Posterior vena cava (tissue), 2 donors: ENCODE measurements at regions of chr7 and their contacts with region 1.

Region 1: GRCh38 chr7:77657427-77658224 is 38.6 kb upstream of the RSBN1L start:
- DNase-seq: no peak

Region 2: GRCh38 chr7:77498659-77499422 is 158.8 kb before region 1 on chr7:
- intact Hi-C with region 1: no loop called
- DNase-seq: no peak

Region 3: DNA sequence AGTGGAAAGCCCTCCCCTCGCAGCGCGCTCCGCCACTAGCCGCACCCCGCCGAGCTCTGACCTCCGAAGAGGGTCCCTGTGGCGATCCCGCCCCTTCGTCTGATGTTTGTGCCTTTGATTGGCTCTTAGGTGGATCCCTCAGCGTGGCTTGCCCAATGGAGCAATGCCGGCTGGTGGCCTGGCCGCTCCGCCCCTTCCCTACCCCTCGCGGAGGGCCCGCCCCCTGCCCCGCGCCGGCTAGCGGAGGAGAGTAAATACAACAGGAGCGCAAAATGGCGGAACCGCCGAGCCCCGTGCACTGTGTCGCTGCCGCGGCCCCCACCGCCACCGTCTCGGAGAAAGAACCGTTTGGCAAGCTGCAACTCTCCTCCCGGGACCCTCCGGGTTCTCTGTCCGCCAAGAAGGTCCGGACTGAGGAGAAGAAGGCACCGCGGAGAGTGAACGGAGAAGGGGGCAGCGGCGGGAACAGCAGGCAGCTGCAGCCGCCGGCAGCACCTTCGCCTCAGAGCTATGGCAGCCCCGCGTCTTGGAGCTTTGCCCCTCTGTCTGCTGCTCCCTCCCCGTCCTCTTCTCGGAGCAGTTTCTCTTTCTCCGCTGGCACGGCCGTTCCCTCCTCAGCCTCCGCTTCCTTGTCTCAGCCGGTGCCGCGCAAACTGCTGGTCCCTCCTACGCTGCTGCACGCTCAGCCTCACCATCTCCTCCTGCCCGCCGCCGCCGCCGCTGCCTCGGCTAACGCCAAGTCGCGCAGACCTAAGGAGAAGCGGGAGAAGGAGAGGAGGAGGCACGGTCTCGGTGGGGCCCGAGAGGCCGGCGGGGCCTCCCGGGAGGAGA is 38.8 kb after region 1 on chr7 and contains the start of gene RSBN1L:
- intact Hi-C with region 1: no loop called
- DNase-seq: peak; percentile 99
- total RNA-seq, gene RSBN1L: 19.2 to 19.8 TPM

Region 4: GRCh38 chr7:77738871-77739270 is 81.2 kb after region 1 on chr7:
- intact Hi-C with region 1: no loop called
- DNase-seq: no peak

Region 5: DNA sequence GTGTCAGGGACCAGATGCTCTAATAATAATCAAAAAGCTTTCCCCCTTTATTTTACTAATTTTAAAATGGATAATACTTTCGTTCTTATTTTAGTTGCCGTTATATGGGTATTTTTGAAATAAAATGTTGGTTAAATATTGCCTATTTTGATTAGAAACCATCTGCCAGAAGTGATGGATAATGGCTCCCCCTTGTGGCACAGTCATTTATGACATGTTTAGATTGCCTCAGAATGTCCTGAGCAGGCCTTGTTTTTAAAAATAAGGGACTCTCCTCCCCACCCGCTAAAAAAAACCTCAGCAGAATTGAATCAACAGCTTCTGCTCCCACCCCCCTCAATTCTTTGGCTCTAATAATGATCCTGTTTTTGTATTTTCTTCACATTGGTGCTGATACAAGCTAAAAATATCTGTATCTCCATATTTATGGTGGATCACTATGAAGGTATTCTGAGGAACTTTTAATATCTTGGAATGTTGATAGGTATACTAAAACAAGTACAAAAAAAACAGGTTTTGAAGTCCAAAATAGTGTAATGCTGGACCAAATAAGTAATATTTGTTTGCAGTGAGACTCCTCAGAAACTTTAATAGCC is 101.8 kb after region 1 on chr7:
- intact Hi-C with region 1: loop called (anchors 2 to 5 kb)
- DNase-seq: no peak

Region 6: GRCh38 chr7:77823787-77824186 is 166.2 kb after region 1 on chr7:
- intact Hi-C with region 1: no loop called
- DNase-seq: no peak